ENCODE measurements at regions of chr10 and their contacts with region 1.

Region 1: DNA sequence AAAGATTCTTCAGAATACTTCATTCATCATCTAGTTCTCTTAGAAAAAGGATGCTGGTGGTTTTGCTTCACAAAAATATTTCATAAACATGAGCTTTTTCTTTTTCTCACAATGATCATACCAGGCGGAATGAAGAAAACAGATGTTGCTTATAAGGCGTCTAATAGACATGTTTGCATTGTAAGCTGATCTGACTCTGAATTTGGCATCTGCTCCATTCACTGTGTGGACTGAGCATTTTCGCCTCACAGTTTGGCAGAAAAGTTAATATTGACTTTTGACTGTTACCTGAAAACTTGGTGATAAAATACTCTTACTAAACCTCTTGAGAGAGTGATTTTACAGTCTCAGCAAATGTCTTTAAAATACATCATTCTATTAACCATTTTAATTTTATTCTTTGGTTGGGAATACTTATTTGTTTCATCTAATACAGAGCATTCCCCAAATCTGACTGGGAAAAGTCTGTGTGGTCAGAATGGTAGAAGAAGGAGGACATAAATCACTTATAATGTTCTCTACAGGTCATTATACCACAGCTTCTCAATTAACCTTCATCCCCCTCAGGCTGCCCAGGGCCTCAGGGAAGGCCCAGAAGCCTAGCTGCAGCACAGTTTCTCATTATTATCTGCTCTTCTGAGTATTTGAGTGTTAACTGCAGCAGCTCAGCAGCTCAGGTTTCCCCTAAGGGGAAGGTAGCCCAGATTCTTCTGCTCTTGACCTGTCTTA is 121.6 kb upstream of the KAT6B start:
- DNase-seq: peak; percentile 30
- ATAC-seq: no peak
- H3K4me3 ChIP-seq: no peak overlapping the region
- H3K27ac ChIP-seq: no peak overlapping the region
- H3K4me1 ChIP-seq: no peaks in the 10 kb centered on the region
- H3K27me3 ChIP-seq: no peaks in the 10 kb centered on the region
- CTCF ChIP-seq: no peak
- POLR2A ChIP-seq: no peak
- RAD21 ChIP-seq: no peak

Region 2: GRCh38 chr10:74419958-74420375 is 284.8 kb before region 1 on chr10:
- CTCF ChIA-PET with region 1: no interaction called
- POLR2A ChIA-PET with region 1: interaction called, 18 read pairs
- dilution Hi-C with region 1: no loop called
- in situ Hi-C with region 1: no loop called
- intact Hi-C with region 1: no loop called
- DNase-seq: peak; percentile 19
- ATAC-seq: no peak
- H3K4me3 ChIP-seq: no peak overlapping the region
- H3K27ac ChIP-seq: no peak overlapping the region
- H3K4me1 ChIP-seq: no peaks in the 10 kb centered on the region; the same call in 1 of the 2 replicates
- H3K27me3 ChIP-seq: no peaks in the 10 kb centered on the region
- CTCF ChIP-seq: peak; percentile 39
- POLR2A ChIP-seq: no peak
- RAD21 ChIP-seq: peak; percentile 40; the same call in 1 of the 2 replicates

Measured in IMR-90 (cell line).